Activated CD4-positive, alpha-beta T cell treated with anti-CD3 and anti-CD28 coated beads for 36 hours (primary cell): ENCODE measurements at regions of chr2 and their contacts with region 1.

Region 1: GRCh38 chr2:71331581-71332434 is at the start of gene ZNF638:
- DNase-seq: peak; percentile 96
- ATAC-seq: peak; percentile 99
- H3K4me3 Mint-ChIP-seq: peak within 1 kb of the TSS; percentile 98
- H3K27ac Mint-ChIP-seq: peak within 1 kb of the TSS; percentile 100
- H3K4me1 Mint-ChIP-seq: peaks cover 31% of the 10 kb centered on the region
- H3K27me3 Mint-ChIP-seq: peaks cover 5% of the 10 kb centered on the region
- total RNA-seq, gene ZNF638: 79.8 to 97.5 TPM

Region 2: GRCh38 chr2:71018625-71019024 is 313.2 kb before region 1 on chr2:
- CTCF ChIA-PET with region 1: no interaction called
- POLR2A ChIA-PET with region 1: no interaction called
- intact Hi-C with region 1: loop called in 1 of 2 experiments (anchors 2 kb)
- DNase-seq: no peak
- ATAC-seq: peak; percentile 47
- H3K4me3 Mint-ChIP-seq: no peak overlapping the region
- H3K27ac Mint-ChIP-seq: no peak overlapping the region
- H3K4me1 Mint-ChIP-seq: peaks cover 7% of the 10 kb centered on the region
- H3K27me3 Mint-ChIP-seq: peaks cover 2% of the 10 kb centered on the region

Region 3: DNA sequence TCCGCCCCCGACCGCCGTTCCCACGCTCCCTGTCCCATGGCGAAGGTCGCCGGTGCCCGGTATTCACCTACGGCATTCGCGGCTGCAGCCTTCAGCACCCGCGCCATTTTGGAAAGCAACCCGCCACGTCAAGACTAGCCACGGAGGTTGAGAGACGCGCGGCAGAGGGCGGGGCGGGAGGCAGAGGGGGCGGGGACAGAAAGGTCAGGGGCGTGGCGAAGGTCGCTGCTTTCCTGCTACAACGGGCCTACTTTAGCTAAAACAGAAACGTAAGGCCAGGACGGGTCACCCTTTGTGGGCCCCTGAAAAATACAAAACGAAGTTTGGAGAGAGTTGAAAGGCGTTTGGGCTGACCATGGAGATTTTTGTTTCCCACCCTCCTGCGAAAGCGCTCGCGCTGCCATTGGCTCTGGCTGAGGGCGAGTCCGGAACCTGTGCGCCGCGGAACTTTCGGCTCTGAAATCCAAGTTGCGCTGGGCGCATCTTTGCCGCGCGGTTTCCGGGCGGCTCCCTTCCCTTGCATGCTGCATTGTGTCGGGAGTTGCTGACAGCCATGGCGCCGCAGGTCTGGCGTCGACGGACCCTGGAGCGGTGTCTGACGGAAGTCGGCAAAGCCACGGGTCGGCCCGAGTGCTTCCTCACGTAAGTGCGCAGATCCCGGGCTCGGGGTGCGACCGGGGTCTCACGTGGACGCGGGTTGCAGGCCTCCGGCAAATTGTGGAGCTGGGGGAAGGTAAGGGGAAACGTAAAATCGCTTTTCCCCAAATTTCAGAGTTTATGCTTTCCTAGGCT is 201.5 kb before region 1 on chr2 and contains the starts of genes MCEE and MPHOSPH10:
- CTCF ChIA-PET with region 1: no interaction called
- POLR2A ChIA-PET with region 1: interaction called, 3 read pairs
- intact Hi-C with region 1: loop called in 1 of 2 experiments (anchors 1 kb)
- DNase-seq: peak; percentile 95
- ATAC-seq: peak; percentile 95
- H3K4me3 Mint-ChIP-seq: no peak within 1 kb of the TSS
- H3K27ac Mint-ChIP-seq: no peak within 1 kb of the TSS
- H3K4me1 Mint-ChIP-seq: peaks cover 18% of the 10 kb centered on the region
- H3K27me3 Mint-ChIP-seq: no peaks in the 10 kb centered on the region
- total RNA-seq, gene MCEE: 10.2 to 13.6 TPM
- total RNA-seq, gene MPHOSPH10: 48.5 to 61.9 TPM

Region 4: GRCh38 chr2:71276311-71277146 is 55.3 kb before region 1 on chr2:
- CTCF ChIA-PET with region 1: interaction called, 4 read pairs
- POLR2A ChIA-PET with region 1: interaction called, 5 read pairs
- intact Hi-C with region 1: loop called (anchors 1 to 5 kb)
- DNase-seq: peak; percentile 94
- ATAC-seq: peak; percentile 100
- H3K4me3 Mint-ChIP-seq: peak overlapping the region; percentile 67
- H3K27ac Mint-ChIP-seq: no peak overlapping the region
- H3K4me1 Mint-ChIP-seq: peaks cover 14% of the 10 kb centered on the region
- H3K27me3 Mint-ChIP-seq: peaks cover 76% of the 10 kb centered on the region

Region 5: GRCh38 chr2:71347517-71347916 is 15.7 kb after region 1 on chr2:
- CTCF ChIA-PET with region 1: interaction called, 12 read pairs
- POLR2A ChIA-PET with region 1: interaction called, 3 read pairs
- intact Hi-C with region 1: loop called (anchors 2 kb)
- DNase-seq: peak; percentile 24
- ATAC-seq: no peak
- H3K4me3 Mint-ChIP-seq: no peak overlapping the region
- H3K27ac Mint-ChIP-seq: no peak overlapping the region
- H3K4me1 Mint-ChIP-seq: peaks cover 55% of the 10 kb centered on the region
- H3K27me3 Mint-ChIP-seq: no peaks in the 10 kb centered on the region

Region 6: DNA sequence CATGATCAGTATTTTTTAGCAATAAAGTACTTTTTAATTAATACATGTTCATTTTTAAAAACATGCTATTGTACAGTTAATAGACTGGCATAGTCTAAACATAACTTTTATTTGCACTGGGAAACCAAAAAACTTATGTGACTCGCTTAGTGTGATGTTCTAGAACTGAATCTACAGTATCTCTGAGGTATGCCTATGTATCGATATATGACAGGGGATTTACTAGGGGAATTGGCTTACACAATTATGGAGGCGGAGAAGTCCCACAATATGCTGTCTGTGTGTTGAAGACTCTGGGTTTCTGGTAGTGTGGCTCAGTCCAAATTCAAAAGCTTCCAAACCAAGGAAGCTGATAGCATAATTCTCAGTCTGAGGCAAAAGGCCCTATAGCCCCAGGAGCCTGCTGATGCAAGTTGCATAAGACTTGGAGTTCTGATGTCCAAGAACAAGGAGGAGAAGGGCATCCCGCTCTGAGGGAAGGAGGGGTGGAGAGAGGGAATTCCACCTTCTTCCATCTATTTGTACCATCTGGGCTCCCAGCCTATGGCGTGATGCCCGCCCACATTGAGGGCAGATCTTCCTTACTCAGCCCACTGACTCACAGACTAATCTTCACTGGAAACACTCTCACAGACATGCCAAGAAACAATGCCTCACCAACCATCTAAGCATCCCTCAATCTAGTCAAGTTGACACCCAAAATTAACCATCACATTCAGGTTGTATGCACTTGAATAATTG is 27.3 kb after region 1 on chr2:
- CTCF ChIA-PET with region 1: interaction called, 3 read pairs
- POLR2A ChIA-PET with region 1: interaction called, 4 read pairs
- intact Hi-C with region 1: loop called in 1 of 2 experiments (anchors 2 kb)
- DNase-seq: peak; percentile 54
- ATAC-seq: peak; percentile 92
- H3K4me3 Mint-ChIP-seq: no peak overlapping the region
- H3K27ac Mint-ChIP-seq: peak overlapping the region; percentile 55
- H3K4me1 Mint-ChIP-seq: peaks cover 48% of the 10 kb centered on the region
- H3K27me3 Mint-ChIP-seq: no peaks in the 10 kb centered on the region